ENCODE measurements at regions of chr2 and their contacts with region 1.

Region 1: GRCh38 chr2:127810619-127811396 is at the start of gene WDR33:
- DNase-seq: peak; percentile 79 to 98 (median 87)

Region 2: DNA sequence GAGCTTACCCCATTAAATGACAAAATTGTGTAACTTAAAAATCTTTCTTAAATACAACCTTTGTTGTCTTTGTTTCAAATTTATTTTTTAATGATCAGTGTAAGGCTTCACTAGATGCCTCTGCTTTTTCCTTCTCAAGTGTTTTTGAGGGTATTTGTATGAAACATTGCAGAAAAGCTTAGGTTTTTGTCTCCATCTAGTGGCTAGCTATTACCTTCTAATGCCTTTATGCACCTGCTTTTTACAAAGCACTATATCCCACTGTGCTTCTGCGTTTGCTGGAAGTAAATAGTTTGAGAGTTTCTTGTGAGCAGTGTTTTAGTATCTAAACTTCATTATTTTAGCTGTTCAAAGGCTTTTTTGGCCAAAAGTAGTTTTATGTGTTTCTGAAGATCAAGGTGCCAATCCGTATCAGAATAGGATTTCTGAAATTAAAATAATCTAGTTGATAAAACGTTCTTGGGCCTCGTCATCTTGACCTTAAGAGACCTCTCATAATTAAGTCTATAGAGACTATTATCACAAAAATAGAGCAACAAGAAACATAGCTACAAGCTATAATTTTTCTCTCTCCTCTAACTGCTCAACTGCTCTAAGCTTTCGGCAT is 331.5 kb before region 1 on chr2:
- intact Hi-C with region 1: no loop called
- DNase-seq: no peak

Region 3: GRCh38 chr2:127857265-127857808 is 46.5 kb after region 1 on chr2:
- intact Hi-C with region 1: loop called (anchors 5 kb)
- DNase-seq: no peak

Region 4: GRCh38 chr2:127906206-127906926 is 95.6 kb after region 1 on chr2:
- intact Hi-C with region 1: no loop called
- DNase-seq: peak in 1 of 10 donors; percentile 73

Region 5: GRCh38 chr2:127943186-127943585 is 132.4 kb after region 1 on chr2:
- intact Hi-C with region 1: no loop called
- DNase-seq: no peak

Measured in posterior cingulate gyrus (tissue), 11 donors.